ENCODE measurements at regions of chr19 and their contacts with region 1.

Region 1: GRCh38 chr19:41353466-41354342 is at the start of gene TGFB1:
- DNase-seq: peak; percentile 92
- H3K4me3 Mint-ChIP-seq: peak within 1 kb of the TSS; percentile 89
- H3K27ac Mint-ChIP-seq: peak within 1 kb of the TSS; percentile 55
- H3K4me1 Mint-ChIP-seq: peaks cover 21% of the 10 kb centered on the region
- H3K27me3 Mint-ChIP-seq: no peaks in the 10 kb centered on the region
- CTCF ChIP-seq: peak; percentile 96
- total RNA-seq, gene TGFB1: 39.2 and 42.0 TPM in 2 replicates

Region 2: DNA sequence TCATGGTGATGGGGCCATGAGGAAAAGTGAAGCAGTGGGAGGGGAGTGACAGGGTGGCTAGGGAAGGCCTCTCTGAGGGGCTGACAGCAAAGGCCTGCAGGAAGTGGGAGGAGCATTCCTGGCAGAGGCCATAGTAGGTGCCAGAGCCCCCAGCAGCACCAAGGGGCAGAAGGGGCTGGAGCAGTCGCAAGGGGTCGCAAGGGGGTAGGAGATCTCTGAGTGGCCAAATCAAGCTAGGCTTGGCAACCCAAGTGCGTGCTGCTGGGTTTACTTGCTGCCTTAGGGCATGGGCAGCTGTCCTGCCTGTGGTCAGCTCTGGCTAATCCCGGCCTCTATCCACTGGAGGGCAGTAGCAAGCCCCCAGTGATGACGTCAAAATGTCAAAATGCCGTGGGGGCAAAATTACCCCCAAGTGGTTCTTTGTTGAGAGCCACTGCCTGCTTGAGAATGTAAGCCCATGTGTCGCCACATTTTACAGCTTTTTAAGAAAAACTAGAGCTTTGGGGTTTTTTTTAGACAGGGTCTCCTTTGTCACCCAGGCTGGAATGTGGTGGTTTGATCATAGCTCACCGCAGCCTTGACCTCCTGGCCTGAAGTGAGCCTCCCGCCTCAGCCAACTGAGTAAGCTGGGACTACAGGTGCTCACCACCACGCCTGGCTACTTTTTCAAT is 32.0 kb before region 1 on chr19:
- CTCF ChIA-PET with region 1: interaction called, 11 read pairs
- intact Hi-C with region 1: no loop called
- DNase-seq: peak; percentile 49
- H3K4me3 Mint-ChIP-seq: no peak overlapping the region
- H3K27ac Mint-ChIP-seq: no peak overlapping the region
- H3K4me1 Mint-ChIP-seq: peaks cover 44% of the 10 kb centered on the region
- H3K27me3 Mint-ChIP-seq: no peaks in the 10 kb centered on the region
- CTCF ChIP-seq: peak; percentile 63

Region 3: DNA sequence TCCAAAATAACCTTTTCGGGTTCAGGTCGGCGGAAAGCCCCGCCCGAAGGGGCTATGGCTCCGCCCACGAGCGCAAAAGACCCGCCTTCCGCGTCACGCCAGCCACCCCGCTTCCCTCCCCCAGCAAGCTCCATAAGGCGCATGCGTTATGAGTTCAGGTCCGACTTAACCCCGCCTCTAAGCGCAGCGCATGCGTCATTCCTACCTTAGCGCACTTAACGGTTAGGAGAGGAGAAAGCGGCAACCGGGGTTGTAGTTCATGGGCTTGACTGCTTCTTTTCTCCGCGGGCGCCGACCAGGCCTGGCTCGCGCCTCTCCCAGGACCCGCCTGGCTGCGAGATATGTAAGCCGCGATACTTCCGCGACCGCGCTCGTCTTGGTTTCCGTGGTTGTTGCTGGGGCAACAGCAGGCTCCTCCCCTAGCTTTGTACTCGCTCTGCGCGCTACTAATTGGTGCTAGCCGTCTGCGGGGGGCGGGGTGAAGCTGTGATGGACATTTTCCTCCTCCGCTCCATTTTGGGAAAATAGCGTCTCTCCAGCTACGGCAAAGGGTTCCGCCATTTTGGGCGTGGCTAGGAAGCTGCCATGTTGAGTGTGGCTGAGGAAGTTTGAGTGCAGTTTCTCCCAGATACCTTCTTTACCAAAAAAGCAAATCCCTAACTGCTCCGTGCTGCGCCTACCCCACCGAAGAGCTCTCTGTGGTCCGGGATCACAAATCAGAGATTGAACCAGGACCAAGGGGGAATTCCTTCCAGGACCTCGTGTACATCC is 10.2 kb after region 1 on chr19 and contains the start of gene B9D2:
- CTCF ChIA-PET with region 1: interaction called, 23 read pairs
- intact Hi-C with region 1: no loop called
- DNase-seq: peak; percentile 99
- H3K4me3 Mint-ChIP-seq: peak within 1 kb of the TSS; percentile 95
- H3K27ac Mint-ChIP-seq: peak within 1 kb of the TSS; percentile 98
- H3K4me1 Mint-ChIP-seq: peaks cover 34% of the 10 kb centered on the region
- H3K27me3 Mint-ChIP-seq: no peaks in the 10 kb centered on the region
- CTCF ChIP-seq: no peak
- total RNA-seq, gene B9D2: 6.4 and 8.5 TPM in 2 replicates

Region 4: GRCh38 chr19:41416194-41416674 is 62.5 kb after region 1 on chr19:
- CTCF ChIA-PET with region 1: no interaction called
- intact Hi-C with region 1: no loop called
- DNase-seq: no peak
- H3K4me3 Mint-ChIP-seq: no peak overlapping the region
- H3K27ac Mint-ChIP-seq: no peak overlapping the region
- H3K4me1 Mint-ChIP-seq: no peaks in the 10 kb centered on the region
- H3K27me3 Mint-ChIP-seq: no peaks in the 10 kb centered on the region
- CTCF ChIP-seq: no peak

Region 5: DNA sequence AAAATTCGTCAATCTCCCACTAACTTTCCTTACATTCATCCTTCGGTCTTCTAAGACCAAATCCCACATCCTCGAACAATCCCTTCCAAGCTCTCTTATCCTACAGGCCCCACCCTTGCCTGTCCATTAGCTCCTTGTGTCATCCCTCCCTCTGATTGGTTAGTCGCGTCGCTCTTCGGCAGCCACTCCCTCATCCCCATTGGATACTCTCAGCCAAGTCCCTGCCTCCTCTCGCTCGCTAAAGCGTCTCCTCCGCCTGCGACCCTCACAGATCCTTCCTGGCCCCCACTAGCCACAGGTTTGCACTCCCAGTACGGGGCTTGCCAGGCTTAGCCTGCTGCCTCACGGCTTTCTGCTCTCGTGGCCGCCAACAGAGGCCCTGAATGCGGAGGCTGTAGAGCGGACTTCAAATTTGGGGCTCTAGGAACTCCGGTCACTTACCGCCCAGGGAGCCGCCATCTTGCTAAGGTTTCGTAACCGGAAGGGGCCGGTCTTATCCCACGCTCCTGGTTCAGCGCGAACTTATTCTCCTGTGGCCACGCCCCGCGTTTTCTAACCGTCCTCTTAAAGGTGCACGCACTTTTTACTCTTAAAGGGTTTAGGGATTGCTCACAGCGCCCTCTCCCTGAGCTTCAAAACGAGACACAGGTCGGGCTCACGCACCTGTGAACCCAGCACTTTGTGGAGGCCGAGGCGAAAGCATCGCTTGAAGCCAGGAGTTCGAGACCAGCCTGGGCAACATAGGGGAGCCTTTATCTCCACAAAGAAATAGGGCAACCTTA is 85.9 kb after region 1 on chr19 and contains the start of gene DMAC2:
- CTCF ChIA-PET with region 1: interaction called, 5 read pairs
- intact Hi-C with region 1: loop called (anchors 10 kb)
- DNase-seq: peak; percentile 97
- H3K4me3 Mint-ChIP-seq: no peak within 1 kb of the TSS
- H3K27ac Mint-ChIP-seq: no peak within 1 kb of the TSS
- H3K4me1 Mint-ChIP-seq: peaks cover 13% of the 10 kb centered on the region
- H3K27me3 Mint-ChIP-seq: peaks cover 21% of the 10 kb centered on the region
- CTCF ChIP-seq: peak; percentile 34
- total RNA-seq, gene DMAC2: 50.5 and 50.8 TPM in 2 replicates